ENCODE measurements at regions of chr3 and their contacts with region 1.

Region 1: DNA sequence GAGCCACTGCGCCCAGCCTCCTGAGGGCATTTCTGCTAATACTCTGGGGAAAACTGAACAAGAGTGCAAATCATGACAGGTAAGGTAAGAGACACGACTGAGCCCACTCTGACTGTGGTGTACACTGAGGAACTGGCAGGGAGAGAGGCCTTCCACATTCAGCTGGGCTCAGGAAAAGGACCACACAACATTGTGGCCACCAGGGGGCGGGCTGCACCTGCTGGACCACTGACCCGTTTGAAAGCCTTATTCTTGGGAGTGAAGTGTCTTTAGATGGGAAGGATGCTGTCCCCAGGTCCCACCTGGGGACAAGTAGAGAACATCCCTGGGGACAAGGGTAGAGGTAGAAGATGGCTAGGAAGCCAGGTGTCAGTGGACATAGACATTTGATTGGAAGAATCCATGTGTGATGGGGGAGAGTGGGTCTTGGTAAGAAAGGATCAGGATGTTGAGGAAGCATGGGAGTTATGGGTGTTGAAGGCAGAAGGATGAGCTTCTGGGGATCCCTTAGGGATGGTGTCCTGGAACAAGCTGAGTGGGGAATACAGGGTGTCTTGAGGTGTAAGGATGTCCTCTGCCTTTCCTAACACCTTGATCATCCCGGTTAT is 6.2 kb upstream of the CTDSPL start:
- DNase-seq: peak; percentile 87 to 89
- H3K4me3 ChIP-seq: no peak overlapping the region
- H3K27ac ChIP-seq: no peak overlapping the region
- H3K4me1 ChIP-seq: peaks cover 0 to 25% (median 18%) of the 10 kb centered on the region in 4 donors
- H3K27me3 ChIP-seq: no peaks in the 10 kb centered on the region
- CTCF ChIP-seq: peak; percentile 87 to 94

Region 2: GRCh38 chr3:37967260-37967881 is 111.9 kb after region 1 on chr3:
- intact Hi-C with region 1: loop called (anchors 2 kb)
- DNase-seq: peak; percentile 68 to 81
- H3K4me3 ChIP-seq: no peak overlapping the region
- H3K27ac ChIP-seq: no peak overlapping the region
- H3K4me1 ChIP-seq: peaks cover 0 to 27% (median 6%) of the 10 kb centered on the region in 4 donors
- H3K27me3 ChIP-seq: no peaks in the 10 kb centered on the region
- CTCF ChIP-seq: peak; percentile 83 to 84

Measured in tibial artery (tissue), 4 donors.